ENCODE measurements at regions of chr6 and their contacts with region 1.

Region 1: GRCh38 chr6:44004625-44005506 is 122.4 kb downstream of the MRPL14 start:
- DNase-seq: no peak
- ATAC-seq: no peak

Region 2: DNA sequence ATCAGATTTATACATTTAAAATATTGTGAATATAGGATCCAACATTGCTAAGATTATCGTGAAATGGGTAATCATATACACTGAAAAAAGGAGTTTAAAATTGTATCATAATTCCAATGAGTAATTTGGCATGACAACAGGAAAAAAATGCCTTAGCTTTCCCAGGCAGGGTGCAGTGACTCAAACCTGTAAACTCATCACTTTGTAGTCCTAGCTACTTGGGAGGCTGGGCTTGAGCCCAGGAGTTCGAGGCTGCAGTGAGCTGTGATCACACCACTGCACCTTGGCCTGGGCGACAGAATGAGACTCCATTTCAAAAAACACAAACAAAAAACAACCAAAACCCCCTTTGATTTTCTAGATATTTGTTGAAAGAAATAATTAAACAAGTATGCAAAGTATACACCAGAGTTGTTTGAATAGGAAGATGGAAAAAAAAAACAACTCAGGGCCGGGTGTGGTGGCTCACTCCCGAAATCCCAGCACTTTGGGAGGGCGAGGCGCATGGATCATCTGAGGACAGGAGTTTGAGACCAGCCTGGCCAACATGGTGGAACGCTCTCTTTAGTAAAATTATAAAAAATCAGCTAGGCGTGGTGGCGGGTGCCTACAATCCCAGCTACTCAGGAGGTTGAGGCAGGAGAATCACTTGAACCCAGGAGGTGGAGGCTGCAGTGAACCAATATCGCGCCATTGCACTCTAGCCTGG is 1651.9 kb before region 1 on chr6:
- intact Hi-C with region 1: no loop called
- DNase-seq: no peak
- ATAC-seq: no peak

Region 3: GRCh38 chr6:42756722-42757121 is 1248.1 kb before region 1 on chr6:
- intact Hi-C with region 1: no loop called
- DNase-seq: no peak
- ATAC-seq: no peak

Region 4: DNA sequence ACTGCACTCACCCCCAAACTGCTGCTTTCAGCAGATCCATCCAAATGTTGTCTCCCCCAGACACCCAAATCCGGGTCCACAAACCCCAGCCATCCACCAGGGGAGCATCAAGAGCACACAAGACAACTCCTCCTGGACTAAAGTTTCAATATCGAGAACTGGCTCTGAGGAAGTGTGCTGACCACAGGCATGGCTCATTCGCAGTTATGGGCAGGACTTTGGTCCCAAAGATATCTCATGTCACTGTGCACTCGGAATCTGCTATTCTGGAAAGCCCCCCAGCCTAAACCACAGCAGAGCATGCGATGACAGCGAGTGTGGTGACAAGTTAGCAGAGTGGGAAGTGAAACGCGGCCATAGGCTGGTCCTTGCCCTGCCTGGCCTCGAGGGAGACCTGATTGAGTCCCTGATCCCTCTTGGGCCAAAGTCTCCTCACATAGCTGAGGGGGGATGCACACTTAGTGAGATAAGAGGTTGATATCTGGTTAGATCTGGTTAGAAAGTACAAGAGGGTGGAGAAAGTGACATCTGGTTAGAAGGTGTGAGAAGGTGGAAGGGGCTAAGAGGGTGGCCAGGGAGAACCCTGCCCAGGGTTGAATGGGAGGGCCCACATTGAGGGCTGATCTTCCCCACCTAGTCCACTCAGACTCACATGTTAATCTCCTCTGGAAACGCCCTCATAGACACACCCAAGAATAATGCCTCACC is 27.3 kb before region 1 on chr6:
- intact Hi-C with region 1: no loop called
- DNase-seq: peak; percentile 50
- ATAC-seq: no peak

Region 5: GRCh38 chr6:44041461-44042260 is 36.8 kb after region 1 on chr6:
- intact Hi-C with region 1: loop called (anchors 5 kb)
- DNase-seq: peak; percentile 65
- ATAC-seq: peak; percentile 45